Right ventricle myocardium inferior (tissue), 1 donor: ENCODE measurements at regions of chr20 and their contacts with region 1.

Region 1: DNA sequence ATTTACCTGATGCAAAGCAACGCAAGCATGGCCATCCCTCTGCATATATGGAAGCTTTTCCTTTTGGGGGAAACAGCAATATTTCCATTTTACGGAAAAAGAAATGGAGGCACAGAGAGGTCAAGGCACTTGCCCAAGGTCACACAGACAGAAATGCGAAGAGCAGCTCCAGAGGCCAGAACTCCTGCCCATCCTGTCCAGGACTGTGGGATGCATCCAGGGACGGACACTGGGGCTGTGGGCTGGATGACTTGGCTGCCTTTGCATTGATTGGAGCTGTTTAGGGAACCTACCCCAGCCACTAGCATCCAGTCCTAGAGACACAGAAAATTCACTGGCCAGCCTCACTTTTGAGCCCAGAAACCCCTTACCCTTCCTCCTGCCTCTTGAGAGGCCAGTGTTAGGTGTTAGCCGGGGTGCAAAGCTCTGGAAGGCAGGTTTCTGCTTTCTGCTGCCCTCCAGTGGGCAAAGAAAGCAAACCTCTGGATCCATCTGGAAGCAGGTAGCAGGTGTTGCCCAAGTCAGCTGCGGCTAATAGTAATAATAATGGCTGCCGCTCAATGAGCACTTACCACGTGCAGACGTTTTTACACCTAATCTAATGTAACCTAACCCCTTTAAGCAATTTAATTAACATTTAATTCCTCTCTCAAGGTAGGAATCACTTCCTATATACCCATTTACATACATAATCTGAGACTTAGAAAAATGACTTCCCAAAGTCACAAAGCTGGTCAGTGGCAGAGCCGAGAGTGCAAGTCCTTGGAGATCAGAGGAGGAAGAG is 31.7 kb upstream of the CCN5 start:
- DNase-seq: no peak
- ATAC-seq: peak; percentile 55

Region 2: GRCh38 chr20:44210422-44211176 is 472.9 kb before region 1 on chr20 and contains the start of gene OSER1:
- intact Hi-C with region 1: loop called (anchors 10 kb)
- DNase-seq: peak; percentile 97
- ATAC-seq: peak; percentile 95
- total RNA-seq, gene OSER1: 32.1 TPM

Region 3: DNA sequence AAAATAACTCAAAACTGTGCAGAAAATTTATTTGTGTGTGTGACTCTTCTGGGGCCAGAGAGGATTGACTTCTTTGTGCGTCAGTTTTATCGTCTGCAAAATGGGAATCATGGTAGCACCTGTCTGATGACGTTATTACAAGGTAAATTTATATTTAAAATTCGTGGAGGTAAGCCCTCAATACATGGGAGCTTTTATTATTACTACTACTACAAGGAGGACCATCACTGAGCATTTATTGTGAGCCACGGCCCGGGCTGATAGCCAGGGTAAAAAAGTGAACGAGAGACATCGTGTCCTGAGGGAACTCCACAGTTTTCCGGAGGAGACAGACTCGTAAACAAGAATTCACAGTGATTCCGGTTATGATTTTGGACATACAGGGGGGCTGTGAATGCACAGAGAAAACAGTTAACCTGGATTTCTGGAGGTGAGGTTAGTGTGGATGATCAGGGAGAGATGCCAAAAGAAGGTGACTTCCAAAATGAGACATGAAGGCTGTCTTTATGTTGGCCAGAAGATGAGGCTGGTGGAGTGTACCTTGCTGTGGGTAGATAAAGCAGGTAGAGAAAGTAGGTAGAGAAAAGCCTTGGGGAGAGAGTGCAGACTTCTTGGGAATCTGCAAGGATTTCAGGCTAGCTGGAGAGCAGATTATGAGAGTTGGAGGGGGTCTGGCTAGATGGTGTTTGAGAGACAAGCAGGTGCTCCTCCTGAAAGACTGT is 151.0 kb before region 1 on chr20:
- intact Hi-C with region 1: loop called (anchors 5 kb)
- DNase-seq: no peak
- ATAC-seq: peak; percentile 53

Region 4: GRCh38 chr20:44733341-44734069 is 50.0 kb after region 1 on chr20:
- intact Hi-C with region 1: loop called (anchors 1 kb)
- DNase-seq: no peak
- ATAC-seq: peak; percentile 54

Region 5: GRCh38 chr20:44866703-44867335 is 183.4 kb after region 1 on chr20:
- intact Hi-C with region 1: loop called (anchors 2 kb)
- DNase-seq: no peak
- ATAC-seq: no peak